AG04450 (cell line): ENCODE measurements at regions of chr6 and their contacts with region 1.

Region 1: GRCh38 chr6:26156076-26156849 is 69.0 kb downstream of the HFE start:
- DNase-seq: peak; percentile 74
- H3K4me3 ChIP-seq: peak overlapping the region; percentile 83
- H3K27ac ChIP-seq: peak overlapping the region; percentile 97
- H3K27me3 ChIP-seq: no peaks in the 10 kb centered on the region
- CTCF ChIP-seq: peak; percentile 1; the same call in 1 of the 2 replicates

Region 2: GRCh38 chr6:26031595-26032339 is 124.5 kb before region 1 on chr6:
- CTCF ChIA-PET with region 1: no interaction called
- POLR2A ChIA-PET with region 1: interaction called, 26 read pairs
- DNase-seq: peak; percentile 87
- H3K4me3 ChIP-seq: peak overlapping the region; percentile 68
- H3K27ac ChIP-seq: peak overlapping the region; percentile 92
- H3K27me3 ChIP-seq: no peaks in the 10 kb centered on the region
- CTCF ChIP-seq: peak; percentile 33

Region 3: DNA sequence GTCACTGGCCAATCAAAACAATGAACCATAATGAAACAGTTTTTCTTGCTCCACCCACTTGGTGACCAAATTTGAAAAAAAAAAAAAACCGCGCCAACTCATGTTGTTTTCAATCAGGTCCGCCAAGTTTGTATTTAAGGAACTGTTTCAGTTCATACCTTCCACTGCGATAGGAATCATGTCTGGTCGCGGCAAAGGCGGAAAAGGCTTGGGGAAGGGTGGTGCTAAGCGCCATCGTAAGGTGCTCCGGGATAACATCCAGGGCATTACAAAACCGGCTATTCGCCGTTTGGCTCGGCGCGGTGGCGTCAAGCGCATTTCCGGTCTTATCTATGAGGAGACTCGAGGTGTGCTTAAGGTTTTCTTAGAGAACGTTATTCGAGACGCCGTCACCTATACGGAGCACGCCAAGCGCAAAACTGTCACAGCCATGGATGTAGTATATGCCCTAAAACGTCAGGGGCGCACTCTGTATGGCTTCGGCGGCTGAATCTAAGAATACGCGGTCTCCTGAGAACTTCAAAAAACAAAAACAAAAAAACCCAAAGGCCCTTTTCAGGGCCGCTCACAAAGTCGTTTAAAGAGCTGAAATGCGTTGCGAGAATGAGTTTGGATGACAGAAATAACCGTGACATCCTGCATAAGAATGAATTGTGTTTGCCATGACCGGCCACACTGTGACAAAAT is 52.4 kb before region 1 on chr6:
- CTCF ChIA-PET with region 1: interaction called, 3 read pairs
- POLR2A ChIA-PET with region 1: interaction called, 12 read pairs
- DNase-seq: peak; percentile 88
- H3K4me3 ChIP-seq: peak overlapping the region; percentile 66
- H3K27ac ChIP-seq: peak overlapping the region; percentile 88
- H3K27me3 ChIP-seq: no peaks in the 10 kb centered on the region
- CTCF ChIP-seq: peak; percentile 62

Region 4: GRCh38 chr6:26172496-26172958 is 16.3 kb after region 1 on chr6:
- CTCF ChIA-PET with region 1: interaction called, 7 read pairs
- POLR2A ChIA-PET with region 1: interaction called, 14 read pairs
- DNase-seq: no peak
- H3K4me3 ChIP-seq: peak overlapping the region; percentile 64
- H3K27ac ChIP-seq: peak overlapping the region; percentile 93
- H3K27me3 ChIP-seq: no peaks in the 10 kb centered on the region
- CTCF ChIP-seq: no peak

Region 5: GRCh38 chr6:26196846-26197648 is 40.8 kb after region 1 on chr6:
- CTCF ChIA-PET with region 1: interaction called, 6 read pairs
- POLR2A ChIA-PET with region 1: interaction called, 118 read pairs
- DNase-seq: peak; percentile 86
- H3K4me3 ChIP-seq: peak overlapping the region; percentile 88
- H3K27ac ChIP-seq: peak overlapping the region; percentile 91
- H3K27me3 ChIP-seq: no peaks in the 10 kb centered on the region
- CTCF ChIP-seq: no peak

Region 6: GRCh38 chr6:26240154-26241032 is 84.1 kb after region 1 on chr6:
- CTCF ChIA-PET with region 1: no interaction called
- POLR2A ChIA-PET with region 1: no interaction called
- DNase-seq: no peak
- H3K4me3 ChIP-seq: peak overlapping the region; percentile 77
- H3K27ac ChIP-seq: peak overlapping the region; percentile 98
- H3K27me3 ChIP-seq: no peaks in the 10 kb centered on the region
- CTCF ChIP-seq: no peak

Region 7: GRCh38 chr6:26270903-26271667 is 114.8 kb after region 1 on chr6:
- CTCF ChIA-PET with region 1: no interaction called
- POLR2A ChIA-PET with region 1: interaction called, 24 read pairs
- DNase-seq: no peak
- H3K4me3 ChIP-seq: peak overlapping the region; percentile 65
- H3K27ac ChIP-seq: peak overlapping the region; percentile 68
- H3K27me3 ChIP-seq: no peaks in the 10 kb centered on the region
- CTCF ChIP-seq: no peak